H1 (cell line): ENCODE measurements at regions of chr10 and their contacts with region 1.

Region 1: DNA sequence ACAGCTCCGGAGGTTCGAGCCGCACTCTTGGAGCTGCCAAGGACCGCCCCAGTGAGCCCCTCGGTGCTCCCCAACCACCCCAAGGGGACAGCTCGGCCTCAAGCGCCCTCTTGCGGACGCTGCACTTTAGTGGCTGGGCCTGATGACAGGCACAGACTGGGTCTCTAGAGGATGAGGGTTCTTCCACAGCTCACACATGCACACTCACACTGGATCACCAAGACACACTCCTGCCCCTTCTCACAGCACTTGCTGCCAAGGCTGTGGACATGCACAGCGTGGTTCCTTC is 2.1 kb downstream of the RET start:
- DNase-seq: peak; percentile 33 to 91
- H3K4me3 ChIP-seq: no peak overlapping the region
- H3K27ac ChIP-seq: no peak overlapping the region
- H3K4me1 ChIP-seq: peaks cover 0 to 10% (median 3%) of the 10 kb centered on the region in 4 experiments; a peak in 3 of 7 replicates
- H3K27me3 ChIP-seq: peaks cover 12 to 37% (median 30%) of the 10 kb centered on the region in 4 experiments
- CTCF ChIP-seq: peak; percentile 90 to 95 (median 92)
- EP300 ChIP-seq: no peak
- POLR2A ChIP-seq: no peak
- RAD21 ChIP-seq: peak; percentile 88 to 93

Region 2: DNA sequence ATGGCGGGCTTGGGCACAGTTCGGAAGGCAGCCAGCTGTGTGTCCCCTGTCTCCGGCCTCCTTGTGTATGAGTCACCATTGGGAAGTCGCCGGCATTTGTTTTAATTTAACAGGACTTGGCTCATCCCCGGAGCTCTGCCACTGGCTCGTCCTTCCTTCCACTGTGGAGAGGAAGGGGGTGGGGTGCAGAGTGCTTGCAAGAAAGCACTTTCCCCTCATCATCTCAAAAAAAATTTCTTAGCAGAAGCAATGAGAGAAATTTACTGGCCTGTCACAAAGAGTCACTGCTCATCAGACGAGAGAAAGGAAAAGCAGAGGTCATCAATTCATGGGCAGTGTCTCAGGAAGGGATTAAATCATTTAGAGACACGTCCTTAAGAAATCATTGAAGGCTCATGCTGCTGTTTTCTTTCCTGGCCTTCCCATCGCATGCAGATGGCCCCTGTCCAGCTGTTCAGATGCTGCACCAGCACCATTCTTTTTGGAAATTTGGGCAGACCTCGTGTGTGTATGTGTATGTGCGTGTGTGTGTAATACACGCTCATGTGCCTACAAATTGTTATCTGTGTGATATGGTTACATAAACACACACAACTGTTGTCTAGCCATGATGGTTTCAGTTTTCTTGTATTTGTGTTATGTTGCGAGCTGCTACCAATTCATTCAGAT is 203.0 kb before region 1 on chr10:
- CTCF ChIA-PET with region 1: interaction called, 12 read pairs
- POLR2A ChIA-PET with region 1: interaction called, 5 read pairs
- DNase-seq: no peak
- H3K4me3 ChIP-seq: no peak overlapping the region
- H3K27ac ChIP-seq: no peak overlapping the region
- H3K4me1 ChIP-seq: no peaks in the 10 kb centered on the region; a peak in 2 of 7 replicates
- H3K27me3 ChIP-seq: no peaks in the 10 kb centered on the region; a peak in 1 of 7 replicates
- CTCF ChIP-seq: no peak
- EP300 ChIP-seq: no peak
- POLR2A ChIP-seq: no peak
- RAD21 ChIP-seq: no peak

Region 3: GRCh38 chr10:42933448-42934340 is 145.2 kb before region 1 on chr10:
- CTCF ChIA-PET with region 1: interaction called, 13 read pairs
- POLR2A ChIA-PET with region 1: no interaction called
- DNase-seq: peak in 1 of 2 experiments; percentile 75
- H3K4me3 ChIP-seq: peak overlapping the region; percentile 44 to 69 (median 52)
- H3K27ac ChIP-seq: no peak overlapping the region
- H3K4me1 ChIP-seq: peaks cover 0 to 13% (median under 1%) of the 10 kb centered on the region in 4 experiments; a peak in 5 of 7 replicates
- H3K27me3 ChIP-seq: peaks cover 1 to 26% (median 24%) of the 10 kb centered on the region in 4 experiments
- CTCF ChIP-seq: no peak
- EP300 ChIP-seq: no peak
- POLR2A ChIP-seq: peak in 1 of 2 experiments; percentile 63; a peak in 1 of 3 replicates
- RAD21 ChIP-seq: no peak

Region 4: DNA sequence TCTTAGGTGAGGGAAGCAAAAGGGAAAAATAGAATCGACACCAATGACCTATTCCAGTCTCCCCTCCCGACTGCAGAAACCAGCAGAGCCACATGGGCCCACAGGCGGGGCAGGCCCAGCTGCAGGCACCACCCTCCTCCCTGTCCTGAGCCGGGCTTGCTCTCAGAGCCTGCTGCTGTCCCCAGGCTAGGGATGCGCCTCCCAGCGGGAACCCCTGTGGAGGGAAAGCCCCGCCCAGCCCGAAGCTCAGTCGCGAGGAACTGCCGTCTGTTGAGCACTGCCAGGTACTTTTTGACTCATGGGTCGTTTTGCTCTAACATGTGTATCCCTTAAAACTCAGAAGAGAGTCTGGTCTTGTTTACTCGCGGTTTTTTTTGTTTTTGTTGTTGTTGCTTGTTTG is 126.6 kb before region 1 on chr10:
- CTCF ChIA-PET with region 1: interaction called, 18 read pairs
- POLR2A ChIA-PET with region 1: no interaction called
- DNase-seq: peak; percentile 64 to 89
- H3K4me3 ChIP-seq: peak overlapping the region; percentile 11 to 55 (median 24); a peak in 7 of 8 replicates
- H3K27ac ChIP-seq: no peak overlapping the region
- H3K4me1 ChIP-seq: peaks cover 0 to 12% (median 8%) of the 10 kb centered on the region in 4 experiments; a peak in 4 of 7 replicates
- H3K27me3 ChIP-seq: peaks cover 0 to 10% (median 2%) of the 10 kb centered on the region in 4 experiments; a peak in 3 of 7 replicates
- CTCF ChIP-seq: no peak
- EP300 ChIP-seq: 0 out of 3 replicates have a peak, but pooled peaks of 1 of the 2 experiments have one; percentile 6
- POLR2A ChIP-seq: no peak
- RAD21 ChIP-seq: peak in 1 of 2 experiments; percentile 14; a peak in 1 of 4 replicates

Region 5: GRCh38 chr10:43093423-43094076 is 14.6 kb after region 1 on chr10:
- CTCF ChIA-PET with region 1: interaction called, 50 read pairs
- POLR2A ChIA-PET with region 1: no interaction called
- DNase-seq: no peak
- H3K4me3 ChIP-seq: no peak overlapping the region
- H3K27ac ChIP-seq: no peak overlapping the region
- H3K4me1 ChIP-seq: peaks cover 0 to 6% (median 3%) of the 10 kb centered on the region in 4 experiments; a peak in 2 of 7 replicates
- H3K27me3 ChIP-seq: no peaks in the 10 kb centered on the region; a peak in 1 of 7 replicates
- CTCF ChIP-seq: peak; percentile 21 to 48 (median 43); a peak in 2 of 4 replicates
- EP300 ChIP-seq: no peak
- POLR2A ChIP-seq: no peak
- RAD21 ChIP-seq: peak; percentile 47 to 61; a peak in 3 of 4 replicates

Region 6: GRCh38 chr10:43110338-43111086 is 31.6 kb after region 1 on chr10:
- CTCF ChIA-PET with region 1: interaction called, 19 read pairs
- POLR2A ChIA-PET with region 1: no interaction called
- DNase-seq: no peak
- H3K4me3 ChIP-seq: no peak overlapping the region
- H3K27ac ChIP-seq: no peak overlapping the region
- H3K4me1 ChIP-seq: peaks cover 0 to 4% (median 0%) of the 10 kb centered on the region in 4 experiments; a peak in 2 of 7 replicates
- H3K27me3 ChIP-seq: no peaks in the 10 kb centered on the region
- CTCF ChIP-seq: no peak
- EP300 ChIP-seq: no peak
- POLR2A ChIP-seq: no peak
- RAD21 ChIP-seq: no peak

Region 7: GRCh38 chr10:43211030-43211429 is 132.1 kb after region 1 on chr10:
- CTCF ChIA-PET with region 1: no interaction called
- POLR2A ChIA-PET with region 1: no interaction called
- DNase-seq: no peak
- H3K4me3 ChIP-seq: no peak overlapping the region
- H3K27ac ChIP-seq: no peak overlapping the region
- H3K4me1 ChIP-seq: peaks cover 0 to 5% (median 0%) of the 10 kb centered on the region in 4 experiments; a peak in 1 of 7 replicates
- H3K27me3 ChIP-seq: no peaks in the 10 kb centered on the region
- CTCF ChIP-seq: no peak
- EP300 ChIP-seq: no peak
- POLR2A ChIP-seq: no peak
- RAD21 ChIP-seq: no peak